Kidney (tissue), 22 donors: ENCODE measurements at regions of chr7 and their contacts with region 1.

Region 1: DNA sequence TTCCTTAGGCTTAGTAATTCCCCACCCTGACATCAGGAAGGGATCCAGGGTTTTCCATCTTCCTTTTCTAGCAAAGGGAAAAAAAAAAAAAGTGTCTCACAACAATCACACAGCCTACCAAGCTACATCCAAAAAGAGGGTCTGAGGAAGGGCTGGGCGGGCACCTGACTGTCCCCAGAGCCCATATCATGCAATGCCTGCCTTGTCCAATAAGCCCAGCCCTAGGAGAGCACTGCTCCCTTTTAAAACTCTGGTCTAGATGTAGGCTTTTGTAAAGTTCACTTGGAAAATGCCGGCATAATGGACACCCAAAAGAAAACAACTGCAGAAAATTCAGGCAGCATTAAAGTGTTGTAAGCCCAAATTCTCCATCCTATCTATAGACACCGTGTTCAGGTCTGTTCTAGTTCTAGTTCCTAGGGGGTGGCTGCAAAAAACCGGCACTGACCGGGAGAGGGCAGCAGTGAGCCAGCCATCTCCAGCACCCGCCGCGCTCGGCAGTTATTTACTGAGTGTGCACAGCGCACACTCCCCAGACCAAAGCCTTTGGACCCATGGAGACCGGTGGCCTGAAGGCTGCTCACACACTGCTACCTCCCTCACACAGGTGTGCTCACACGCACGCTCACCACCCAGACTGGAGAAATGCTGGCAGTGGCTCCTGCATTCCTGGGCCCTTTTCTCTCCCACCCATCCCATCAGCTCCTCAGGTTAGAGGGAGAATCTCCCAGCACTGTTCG is 48.7 kb downstream of the PODXL start:
- DNase-seq: peak; percentile 79 to 92 (median 85)
- H3K4me3 ChIP-seq: peak overlapping the region in 1 of 3 donors; percentile 6
- H3K27ac ChIP-seq: no peak overlapping the region
- H3K4me1 ChIP-seq: peaks cover 0 to 28% (median 21%) of the 10 kb centered on the region in 3 donors
- H3K27me3 ChIP-seq: no peaks in the 10 kb centered on the region
- CTCF ChIP-seq: peak; percentile 89

Region 2: DNA sequence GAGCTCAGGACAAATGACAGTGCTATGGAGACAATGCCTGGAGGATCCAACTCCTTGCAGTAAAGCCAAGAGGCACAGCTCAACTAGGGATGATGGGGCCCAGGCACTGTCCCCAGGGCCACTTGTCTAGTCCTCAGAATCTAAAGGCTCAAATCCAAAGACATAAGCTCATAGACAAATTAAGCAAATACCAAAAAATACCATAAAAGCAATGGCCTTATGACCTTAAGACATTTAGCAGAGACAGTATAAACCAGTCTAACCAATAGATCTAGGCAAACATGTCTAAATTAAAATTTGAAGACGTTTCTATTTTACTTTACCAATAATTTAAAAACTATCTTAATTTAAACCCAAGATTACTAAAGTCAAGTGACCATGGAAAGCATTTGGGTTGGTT is 194.9 kb before region 1 on chr7:
- intact Hi-C with region 1: no loop called
- DNase-seq: no peak
- H3K4me3 ChIP-seq: no peak overlapping the region
- H3K27ac ChIP-seq: no peak overlapping the region
- H3K4me1 ChIP-seq: no peaks in the 10 kb centered on the region
- H3K27me3 ChIP-seq: no peaks in the 10 kb centered on the region
- CTCF ChIP-seq: no peak

Region 3: DNA sequence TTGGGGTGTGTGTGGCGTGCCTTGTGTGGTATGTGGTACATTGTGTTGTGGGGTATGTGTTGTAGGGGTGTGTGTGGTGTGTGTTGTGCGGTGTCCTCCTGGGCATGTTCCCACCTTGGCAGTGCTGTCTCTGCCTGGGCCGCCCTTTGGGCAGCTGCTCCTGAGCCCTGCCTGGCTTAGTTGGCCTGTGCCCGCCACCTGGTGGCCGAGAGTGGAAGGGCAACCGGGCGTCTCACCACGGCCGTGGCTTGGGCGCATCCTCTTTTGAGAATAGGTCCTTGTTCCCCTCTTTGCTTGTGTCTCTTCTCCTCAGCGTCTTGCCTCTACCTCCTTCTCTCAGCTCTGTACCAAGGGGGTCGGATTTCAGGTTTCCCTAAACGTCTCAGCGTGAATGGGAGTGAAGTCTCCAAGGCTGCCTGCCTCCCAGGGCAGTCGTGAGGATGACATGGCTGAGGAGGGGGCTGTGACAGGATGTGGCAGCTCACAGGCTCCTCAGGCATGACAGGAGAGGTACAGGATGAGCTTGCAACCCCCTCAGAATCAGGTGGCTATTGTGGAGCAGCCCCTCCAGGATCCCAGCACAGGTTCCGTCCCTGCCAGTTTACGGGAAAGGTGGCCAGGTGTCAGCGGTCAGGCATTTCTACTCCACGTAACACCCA is 147.0 kb after region 1 on chr7:
- intact Hi-C with region 1: loop called (anchors 10 kb)
- DNase-seq: peak; percentile 72 to 93 (median 87)
- H3K4me3 ChIP-seq: no peak overlapping the region
- H3K27ac ChIP-seq: no peak overlapping the region
- H3K4me1 ChIP-seq: no peaks in the 10 kb centered on the region
- H3K27me3 ChIP-seq: no peaks in the 10 kb centered on the region
- CTCF ChIP-seq: peak; percentile 94

Region 4: DNA sequence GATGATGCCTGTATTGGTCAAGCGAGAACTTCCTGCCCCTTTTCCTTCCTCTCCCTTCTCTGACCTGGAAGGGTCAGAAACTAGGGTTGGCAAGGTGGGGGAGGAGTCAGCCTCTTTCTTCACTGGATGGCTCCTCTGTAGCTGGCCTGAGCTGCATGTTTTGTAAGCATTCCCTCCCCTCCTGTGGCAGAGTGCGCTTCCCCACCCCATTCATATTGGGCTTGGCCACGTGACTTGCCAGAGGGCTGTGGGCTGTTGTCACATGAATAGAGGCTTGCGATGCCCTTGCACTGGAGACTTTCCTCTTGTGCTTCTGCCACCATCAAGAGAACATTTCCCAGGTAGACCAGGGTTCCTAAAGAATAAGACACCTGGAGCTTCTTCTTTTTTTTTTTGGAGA is 159.9 kb after region 1 on chr7:
- intact Hi-C with region 1: no loop called
- DNase-seq: no peak
- H3K4me3 ChIP-seq: no peak overlapping the region
- H3K27ac ChIP-seq: no peak overlapping the region
- H3K4me1 ChIP-seq: no peaks in the 10 kb centered on the region
- H3K27me3 ChIP-seq: no peaks in the 10 kb centered on the region
- CTCF ChIP-seq: no peak